Psoas muscle (tissue), 8 donors: ENCODE measurements at regions of chr9 and their contacts with region 1.

Region 1: GRCh38 chr9:109316207-109316640 is 4.6 kb downstream of the EPB41L4B start:
- DNase-seq: peak; percentile 80 to 90
- ATAC-seq: peak; percentile 86 to 91 (median 90)
- H3K4me3 ChIP-seq: no peak overlapping the region
- H3K27ac ChIP-seq: no peak overlapping the region
- H3K4me1 ChIP-seq: no peaks in the 10 kb centered on the region
- H3K27me3 ChIP-seq: peaks cover 0 to 22% (median 5%) of the 10 kb centered on the region in 3 donors
- CTCF ChIP-seq: no peak

Region 2: GRCh38 chr9:109182940-109183798 is 133.1 kb before region 1 on chr9:
- intact Hi-C with region 1: loop called in 1 of 2 experiments (anchors 5 kb)
- DNase-seq: no peak
- ATAC-seq: peak in 2 of 4 donors; percentile 43 to 62
- H3K4me3 ChIP-seq: no peak overlapping the region
- H3K27ac ChIP-seq: no peak overlapping the region
- H3K4me1 ChIP-seq: no peaks in the 10 kb centered on the region
- H3K27me3 ChIP-seq: no peaks in the 10 kb centered on the region
- CTCF ChIP-seq: no peak